ENCODE measurements at regions of chr3 and their contacts with region 1.

Region 1: DNA sequence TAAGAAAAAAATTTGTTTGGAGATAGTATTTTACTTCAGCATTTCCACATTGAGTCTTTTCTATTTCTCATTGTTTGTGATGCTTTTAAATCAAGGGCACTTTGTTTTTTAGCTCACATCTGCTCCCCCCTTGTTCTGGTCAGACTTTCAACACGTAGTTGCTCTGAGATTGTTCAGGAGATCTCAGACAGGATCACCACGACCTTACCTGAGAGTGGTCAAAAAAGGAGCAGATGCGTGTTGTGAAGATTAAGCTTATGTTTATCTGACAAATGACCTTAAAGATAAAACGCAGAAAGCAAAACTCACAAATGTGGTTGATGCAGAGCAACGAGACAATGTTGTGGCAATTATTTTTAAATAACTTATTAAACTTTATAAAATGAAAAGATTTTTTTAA is 298.3 kb downstream of the ROBO2 start:
- DNase-seq: no peak
- H3K4me3 ChIP-seq: no peak overlapping the region
- H3K27ac ChIP-seq: no peak overlapping the region
- H3K4me1 ChIP-seq: no peaks in the 10 kb centered on the region
- H3K27me3 ChIP-seq: no peaks in the 10 kb centered on the region
- CTCF ChIP-seq: no peak
- EP300 ChIP-seq: no peak
- RAD21 ChIP-seq: no peak

Region 2: DNA sequence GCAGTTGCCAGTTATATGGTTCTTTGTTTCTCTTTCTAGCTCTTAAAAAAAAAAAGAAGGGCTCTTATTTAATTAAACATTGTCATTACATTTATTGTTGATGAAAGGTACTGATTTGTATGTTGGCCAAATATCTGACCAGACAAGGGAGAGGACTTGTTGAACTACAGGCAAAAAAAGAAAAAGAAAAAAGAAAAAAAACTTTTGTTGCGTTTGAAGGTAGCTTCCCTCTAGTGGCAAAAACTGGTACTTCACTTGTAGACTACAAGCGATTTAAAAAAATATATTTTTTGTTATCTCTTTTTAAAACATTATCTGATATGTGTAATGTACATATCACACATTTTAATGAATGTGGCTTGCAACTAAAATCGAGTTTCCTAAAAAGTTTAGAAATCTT is 17.7 kb before region 1 on chr3:
- CTCF ChIA-PET with region 1: interaction called, 26 read pairs
- POLR2A ChIA-PET with region 1: no interaction called
- DNase-seq: peak; percentile 21
- H3K4me3 ChIP-seq: no peak overlapping the region
- H3K27ac ChIP-seq: no peak overlapping the region
- H3K4me1 ChIP-seq: no peaks in the 10 kb centered on the region; a peak in 1 of 4 replicates
- H3K27me3 ChIP-seq: no peaks in the 10 kb centered on the region
- CTCF ChIP-seq: peak; percentile 80
- EP300 ChIP-seq: no peak
- RAD21 ChIP-seq: peak; percentile 52

Region 3: DNA sequence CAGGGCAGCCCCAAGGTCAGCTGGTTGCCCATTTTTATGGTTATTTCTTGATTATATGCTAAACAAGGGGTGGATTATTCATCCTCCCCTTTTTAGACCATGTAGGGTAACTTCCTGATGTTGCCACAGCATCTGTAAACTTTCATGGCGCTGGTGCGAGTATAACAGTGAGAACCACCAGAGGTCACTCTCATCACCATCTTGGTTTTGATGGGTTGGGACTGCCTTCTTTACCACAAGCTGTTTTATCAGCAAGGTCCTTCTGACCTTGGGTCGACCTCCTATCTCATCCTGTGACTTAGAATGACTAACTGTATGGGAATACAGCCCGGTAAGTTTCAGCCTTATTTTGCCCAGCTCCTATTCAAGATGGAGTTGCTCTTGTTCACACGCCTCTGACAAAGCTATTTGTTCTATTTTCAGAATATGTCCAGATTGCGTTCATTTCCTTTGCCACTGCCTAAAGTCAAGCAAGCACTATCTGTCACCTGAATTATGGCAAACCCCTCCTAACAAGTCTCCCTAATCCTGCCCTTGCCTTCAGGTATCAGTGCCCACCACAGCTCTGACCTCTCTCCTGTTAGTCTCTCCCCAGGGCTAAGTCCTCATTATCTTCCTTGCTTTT is 10.1 kb after region 1 on chr3:
- CTCF ChIA-PET with region 1: interaction called, 10 read pairs
- POLR2A ChIA-PET with region 1: no interaction called
- DNase-seq: peak; percentile 1
- H3K4me3 ChIP-seq: no peak overlapping the region; a peak in 1 of 4 replicates
- H3K27ac ChIP-seq: no peak overlapping the region
- H3K4me1 ChIP-seq: no peaks in the 10 kb centered on the region
- H3K27me3 ChIP-seq: no peaks in the 10 kb centered on the region
- CTCF ChIP-seq: peak; percentile 59
- EP300 ChIP-seq: no peak
- RAD21 ChIP-seq: peak; percentile 69

Measured in SK-N-SH (cell line).